Left cardiac atrium (tissue), 4 donors: ENCODE measurements at regions of chr6 and their contacts with region 1.

Region 1: DNA sequence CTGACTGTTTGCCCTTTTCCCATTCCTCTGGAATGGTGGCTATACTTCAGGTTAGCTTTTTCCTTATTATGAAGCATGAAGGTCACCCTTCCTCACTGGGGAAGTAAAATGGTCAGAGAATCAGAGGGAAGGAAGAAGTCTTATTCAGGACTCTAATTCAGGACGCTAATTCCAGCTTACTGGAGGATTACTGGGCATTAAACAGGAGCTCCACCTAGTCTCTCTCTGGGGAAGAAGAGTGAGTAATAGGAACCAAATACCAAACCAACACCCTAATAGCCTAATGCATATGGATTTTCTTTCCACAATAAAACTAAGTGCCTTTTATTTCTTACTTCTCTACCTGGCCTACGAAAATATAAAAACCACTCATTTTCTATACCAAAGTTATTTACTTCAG is 10.1 kb downstream of the CRISP1 start:
- DNase-seq: no peak
- ATAC-seq: no peak

Region 2: GRCh38 chr6:49531774-49532569 is 324.3 kb before region 1 on chr6:
- intact Hi-C with region 1: loop called (anchors 2 to 5 kb)
- DNase-seq: no peak
- ATAC-seq: peak in 1 of 2 donors; percentile 72

Region 3: GRCh38 chr6:49625140-49625539 is 231.1 kb before region 1 on chr6:
- intact Hi-C with region 1: loop called (anchors 5 to 10 kb)
- DNase-seq: no peak
- ATAC-seq: no peak